ENCODE measurements at regions of chr1 and their contacts with region 1.

Region 1: DNA sequence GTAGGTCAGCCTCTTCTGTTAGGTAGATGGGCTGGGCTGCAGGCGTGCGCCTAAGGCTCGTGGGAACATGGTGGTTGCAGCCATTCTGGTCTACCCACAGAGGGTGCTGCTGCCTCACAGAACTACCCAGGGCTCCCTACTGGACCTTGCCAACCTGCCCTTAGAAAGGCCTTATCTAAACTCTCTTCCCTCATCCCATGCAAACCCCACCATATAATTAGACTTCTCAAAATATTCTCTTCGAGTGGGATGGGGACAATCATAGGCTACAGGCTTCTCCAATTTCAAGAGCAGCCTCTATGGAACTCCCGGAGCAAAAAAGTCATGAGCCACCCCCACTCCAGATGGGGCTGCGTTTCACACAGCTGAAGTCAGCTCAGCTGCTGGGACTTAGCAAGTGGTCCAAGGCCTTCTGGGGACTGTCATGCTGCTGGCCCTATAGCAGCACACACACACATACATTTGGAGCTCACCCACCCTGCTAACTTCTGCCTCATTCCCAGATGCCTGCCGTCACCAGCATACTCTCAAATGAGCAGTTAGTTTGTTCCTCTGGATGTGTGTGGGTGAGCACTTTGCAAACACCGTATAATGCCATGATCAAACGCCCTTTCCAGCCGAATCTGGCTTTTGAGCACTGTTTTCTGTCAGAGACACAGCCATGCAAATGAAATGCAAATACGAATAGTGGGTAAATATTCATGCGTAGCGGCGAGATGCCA is 6.1 kb upstream of the SDHB start:
- DNase-seq: peak; percentile 59
- ATAC-seq: peak; percentile 100
- H3K4me3 ChIP-seq: no peak overlapping the region
- H3K27ac ChIP-seq: no peak overlapping the region
- H3K4me1 ChIP-seq: peaks cover 0 to 16% of the 10 kb centered on the region in 2 experiments; a peak in 2 of 4 replicates
- H3K27me3 ChIP-seq: no peaks in the 10 kb centered on the region
- CTCF ChIP-seq: peak; percentile 81 to 90 (median 85)
- POLR2A ChIP-seq: no peak
- RAD21 ChIP-seq: peak; percentile 94

Region 2: DNA sequence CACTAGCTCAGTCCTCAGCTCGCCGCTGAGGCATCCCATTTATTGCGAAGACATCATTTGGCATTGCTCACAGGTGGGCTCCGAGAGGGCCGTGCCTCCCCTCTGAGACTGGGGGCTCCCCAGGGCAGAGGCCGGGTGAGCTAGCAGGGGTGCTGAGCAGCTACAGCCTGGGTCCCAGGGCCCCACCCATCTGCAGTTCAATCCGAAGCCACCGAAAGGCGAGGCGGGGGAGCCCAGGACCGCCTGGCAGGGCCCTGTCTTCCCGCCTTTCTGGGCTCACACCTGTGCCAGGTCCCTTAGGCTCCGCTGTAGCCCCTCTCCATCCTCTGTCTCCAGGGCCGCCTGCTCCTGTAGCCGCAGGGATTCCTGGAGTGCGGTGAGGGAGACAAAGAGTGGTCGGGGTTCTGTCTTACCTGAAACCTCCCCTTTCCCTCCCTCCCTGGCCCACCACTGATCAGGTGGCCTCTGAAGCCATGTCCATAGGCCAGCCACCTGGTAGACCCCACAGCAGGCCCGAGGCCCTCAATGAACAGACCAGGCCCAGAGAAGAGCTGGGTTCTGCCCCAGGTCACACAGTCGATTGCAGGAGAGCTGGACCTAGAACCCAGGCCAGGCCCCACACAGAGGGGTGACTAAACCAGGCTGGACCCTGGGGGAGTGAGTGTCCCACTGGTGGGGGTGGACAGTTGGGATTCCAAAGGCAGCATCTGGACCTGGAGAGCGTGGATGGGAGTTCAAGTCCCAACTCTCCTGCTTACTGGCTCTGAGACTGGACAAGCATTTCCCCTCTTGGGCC is 428.5 kb before region 1 on chr1:
- CTCF ChIA-PET with region 1: no interaction called
- POLR2A ChIA-PET with region 1: no interaction called
- RAD21 ChIA-PET with region 1: no interaction called
- intact Hi-C with region 1: no loop called
- DNase-seq: no peak
- ATAC-seq: no peak
- H3K4me3 ChIP-seq: no peak overlapping the region
- H3K27ac ChIP-seq: no peak overlapping the region; the same call in 1 of the 2 replicates
- H3K4me1 ChIP-seq: no peaks in the 10 kb centered on the region
- H3K27me3 ChIP-seq: no peaks in the 10 kb centered on the region
- CTCF ChIP-seq: no peak
- POLR2A ChIP-seq: no peak
- RAD21 ChIP-seq: no peak

Region 3: DNA sequence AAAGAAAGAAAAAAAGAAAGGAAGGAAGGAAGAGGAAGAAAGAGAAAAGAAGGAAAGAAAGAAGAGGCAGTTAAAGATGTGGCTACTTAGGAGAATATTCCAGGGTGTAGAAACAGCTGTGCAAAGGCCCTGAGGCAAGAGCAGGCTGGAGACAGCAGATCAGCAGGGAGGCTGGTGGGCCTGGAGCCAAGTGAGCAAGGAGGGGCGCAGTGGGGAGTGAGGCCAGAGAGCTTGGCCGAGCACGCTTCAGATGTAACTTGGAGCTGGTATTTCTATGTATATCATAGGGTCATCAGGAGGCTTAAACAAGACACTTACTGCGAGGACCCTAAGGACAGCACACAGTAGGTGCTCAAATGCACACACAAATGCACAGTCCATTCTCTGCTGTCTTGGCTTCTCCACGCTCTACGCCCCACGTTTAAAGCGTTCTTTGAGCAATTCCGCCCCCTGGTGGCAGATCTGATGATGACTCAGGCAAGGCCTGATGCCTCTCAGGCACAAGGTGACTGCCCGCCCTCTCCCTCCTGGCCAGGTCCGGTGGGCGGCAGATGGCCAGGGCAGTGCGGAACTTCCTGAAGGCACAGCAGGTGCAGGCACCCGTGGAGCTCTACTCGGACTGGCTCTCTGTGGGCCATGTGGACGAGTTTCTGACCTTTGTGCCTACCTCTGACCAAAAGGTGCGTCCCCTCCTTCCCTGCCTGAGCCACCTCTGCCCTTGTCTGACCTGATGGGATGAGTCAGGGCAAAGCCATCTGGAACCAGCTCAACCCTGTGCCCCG is 177.1 kb after region 1 on chr1:
- CTCF ChIA-PET with region 1: interaction called, 4 read pairs
- POLR2A ChIA-PET with region 1: interaction called, 3 read pairs
- RAD21 ChIA-PET with region 1: interaction called in 1 of 2 experiments, 3 read pairs
- intact Hi-C with region 1: loop called (anchors 1 kb)
- DNase-seq: peak; percentile 85
- ATAC-seq: peak; percentile 70
- H3K4me3 ChIP-seq: no peak overlapping the region
- H3K27ac ChIP-seq: no peak overlapping the region
- H3K4me1 ChIP-seq: peaks cover 29 to 62% of the 10 kb centered on the region in 2 experiments
- H3K27me3 ChIP-seq: peaks cover 11% of the 10 kb centered on the region; the same call in 1 of the 2 replicates
- CTCF ChIP-seq: peak in 2 of 3 experiments; percentile 76 to 88; a peak in 4 of 6 replicates
- POLR2A ChIP-seq: no peak
- RAD21 ChIP-seq: no peak

Region 4: GRCh38 chr1:17274186-17275170 is 214.6 kb after region 1 on chr1:
- CTCF ChIA-PET with region 1: no interaction called
- POLR2A ChIA-PET with region 1: no interaction called
- RAD21 ChIA-PET with region 1: no interaction called
- intact Hi-C with region 1: loop called (anchors 5 kb)
- DNase-seq: peak; percentile 42
- ATAC-seq: peak; percentile 98
- H3K4me3 ChIP-seq: no peak overlapping the region
- H3K27ac ChIP-seq: no peak overlapping the region
- H3K4me1 ChIP-seq: peaks cover 0 to 12% of the 10 kb centered on the region in 2 experiments; a peak in 2 of 4 replicates
- H3K27me3 ChIP-seq: no peaks in the 10 kb centered on the region
- CTCF ChIP-seq: peak; percentile 77 to 97 (median 89)
- POLR2A ChIP-seq: no peak
- RAD21 ChIP-seq: peak; percentile 86

Region 5: DNA sequence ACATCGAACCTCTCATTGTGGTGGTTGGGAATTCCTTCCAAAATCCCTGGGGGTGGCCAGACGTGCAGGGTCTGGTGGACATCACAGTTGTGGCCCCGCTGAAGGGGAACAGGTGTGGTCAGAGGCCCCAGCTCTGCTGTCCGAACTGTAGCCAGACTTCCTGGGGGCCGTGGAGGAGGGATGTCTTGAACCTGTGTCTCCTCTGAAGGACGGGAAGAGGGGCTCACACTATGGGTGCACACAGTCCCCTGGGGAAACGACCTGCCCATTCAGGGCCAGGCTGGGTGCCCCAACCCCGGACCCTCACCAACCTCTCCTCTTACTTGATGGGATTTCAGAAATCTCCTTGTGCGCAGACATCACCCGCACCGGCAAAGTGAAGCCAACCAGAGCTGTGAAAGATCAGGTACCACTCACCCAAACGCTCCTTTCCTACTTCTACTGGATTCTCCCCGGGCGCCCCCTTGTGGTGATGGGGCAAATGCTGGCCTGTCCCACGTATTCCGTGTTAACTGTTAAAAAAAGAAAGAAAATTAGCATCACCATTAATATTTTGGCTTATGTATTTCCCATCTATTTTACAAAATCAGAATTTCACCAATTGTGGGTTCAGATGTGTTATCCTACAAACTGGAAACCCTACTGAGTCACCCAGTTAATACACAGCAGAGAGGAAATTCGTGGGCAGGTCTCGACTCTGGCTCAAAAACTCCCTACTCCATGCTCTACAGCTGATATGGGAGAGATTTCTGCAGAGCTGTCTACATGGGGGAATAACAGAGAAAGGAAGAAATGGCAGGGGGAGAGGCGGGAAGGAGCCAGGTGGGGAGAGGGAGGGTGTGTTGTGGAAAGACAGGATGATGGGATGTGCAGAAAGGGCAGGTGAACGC is 276.2 kb after region 1 on chr1:
- CTCF ChIA-PET with region 1: interaction called, 3 read pairs
- POLR2A ChIA-PET with region 1: no interaction called
- RAD21 ChIA-PET with region 1: no interaction called
- intact Hi-C with region 1: loop called (anchors 1 kb)
- DNase-seq: peak; percentile 37
- ATAC-seq: peak; percentile 95
- H3K4me3 ChIP-seq: no peak overlapping the region
- H3K27ac ChIP-seq: no peak overlapping the region
- H3K4me1 ChIP-seq: peaks cover 4 to 11% of the 10 kb centered on the region in 2 experiments
- H3K27me3 ChIP-seq: no peaks in the 10 kb centered on the region
- CTCF ChIP-seq: peak; percentile 85 to 97 (median 89)
- POLR2A ChIP-seq: no peak
- RAD21 ChIP-seq: peak; percentile 75

Region 6: DNA sequence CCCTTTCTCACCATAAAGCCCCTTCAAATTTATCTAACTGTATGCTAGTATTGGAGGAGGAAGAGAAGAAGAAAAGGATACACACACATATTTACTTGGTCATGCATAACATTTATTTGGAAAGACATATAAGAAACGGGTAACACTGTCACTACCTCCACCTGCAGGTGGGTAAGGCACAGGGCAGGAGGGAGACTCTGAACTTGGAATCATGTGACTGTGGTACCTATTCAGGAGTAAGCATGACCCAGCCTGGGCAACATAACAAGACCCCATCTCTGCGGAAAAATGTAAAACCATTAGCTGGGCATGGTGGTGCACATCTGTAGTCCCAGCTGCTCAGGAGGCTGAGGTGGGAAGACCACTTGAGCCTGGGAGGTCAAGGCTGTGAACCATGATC is 310.7 kb after region 1 on chr1:
- CTCF ChIA-PET with region 1: no interaction called
- POLR2A ChIA-PET with region 1: no interaction called
- RAD21 ChIA-PET with region 1: no interaction called
- intact Hi-C with region 1: loop called (anchors 1 kb)
- DNase-seq: peak; percentile 37
- ATAC-seq: peak; percentile 95
- H3K4me3 ChIP-seq: no peak overlapping the region
- H3K27ac ChIP-seq: no peak overlapping the region
- H3K4me1 ChIP-seq: peaks cover 0 to 7% of the 10 kb centered on the region in 2 experiments; a peak in 1 of 4 replicates
- H3K27me3 ChIP-seq: peaks cover 3% of the 10 kb centered on the region; the same call in 1 of the 2 replicates
- CTCF ChIP-seq: peak; percentile 63 to 83 (median 78); a peak in 5 of 6 replicates
- POLR2A ChIP-seq: no peak
- RAD21 ChIP-seq: peak; percentile 78

Region 7: GRCh38 chr1:17405898-17406759 is 346.2 kb after region 1 on chr1:
- CTCF ChIA-PET with region 1: interaction called, 8 read pairs
- POLR2A ChIA-PET with region 1: no interaction called
- RAD21 ChIA-PET with region 1: no interaction called
- intact Hi-C with region 1: loop called (anchors 1 kb)
- DNase-seq: peak; percentile 22
- ATAC-seq: peak; percentile 93
- H3K4me3 ChIP-seq: no peak overlapping the region
- H3K27ac ChIP-seq: no peak overlapping the region
- H3K4me1 ChIP-seq: no peaks in the 10 kb centered on the region
- H3K27me3 ChIP-seq: no peaks in the 10 kb centered on the region
- CTCF ChIP-seq: peak; percentile 55 to 87 (median 83)
- POLR2A ChIP-seq: no peak
- RAD21 ChIP-seq: peak; percentile 75

Measured in HCT116 (cell line).